ENCODE measurements at regions of chr15 and their contacts with region 1.

Region 1: DNA sequence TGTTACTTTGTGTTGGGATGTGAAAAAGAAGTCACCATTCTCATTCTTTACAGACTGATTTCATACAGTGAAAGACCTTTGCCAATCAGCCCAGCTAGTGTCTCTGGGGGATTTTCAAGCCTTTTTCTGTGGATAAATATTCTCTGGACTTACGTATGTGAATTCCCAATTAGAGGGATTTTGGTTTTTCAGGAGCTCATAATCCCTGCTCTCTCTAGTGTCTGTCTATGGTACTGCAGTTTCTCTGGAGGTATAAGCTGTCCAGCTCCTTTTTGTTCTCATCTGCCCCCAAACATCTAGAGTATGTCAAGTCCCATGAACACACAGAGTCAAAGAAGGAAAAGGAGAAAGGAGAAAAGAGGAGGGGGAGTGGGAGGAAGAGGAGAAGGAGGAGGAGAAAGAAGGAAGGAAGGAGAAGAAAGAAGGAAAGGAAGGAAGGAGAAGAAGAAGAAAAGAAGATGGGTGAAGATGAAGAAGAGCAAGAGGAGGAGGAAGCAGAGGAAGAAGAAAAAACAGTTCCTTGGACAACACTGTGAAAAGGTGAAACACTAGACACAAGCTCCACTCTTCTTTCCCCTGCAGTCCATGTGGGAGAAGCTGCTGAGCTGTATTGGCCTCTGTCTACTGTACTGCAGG is 218.6 kb downstream of the GREM1 start:
- DNase-seq: no peak
- H3K4me3 Mint-ChIP-seq: no peak overlapping the region
- H3K27ac Mint-ChIP-seq: no peak overlapping the region
- H3K4me1 Mint-ChIP-seq: no peaks in the 10 kb centered on the region
- H3K27me3 Mint-ChIP-seq: no peaks in the 10 kb centered on the region
- CTCF ChIP-seq: no peak

Region 2: DNA sequence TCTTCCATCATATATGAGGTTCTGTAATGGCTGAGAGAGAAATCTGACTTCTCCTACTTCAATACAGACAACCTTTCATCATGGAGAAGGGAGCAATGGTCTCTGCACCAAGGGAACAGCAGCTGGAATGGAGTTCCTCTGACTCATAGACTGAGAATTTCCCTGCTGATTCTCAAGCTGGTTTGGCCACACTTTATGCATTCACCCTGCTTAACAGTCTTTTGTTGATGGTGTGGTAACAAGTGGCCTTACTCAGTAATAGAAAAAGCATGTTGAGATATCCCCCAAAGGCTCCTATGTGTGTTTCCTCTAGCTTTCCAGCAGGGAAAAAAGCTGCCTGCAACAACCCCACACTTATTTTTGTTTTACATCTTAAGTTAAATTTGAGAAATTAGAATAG is 80.5 kb before region 1 on chr15:
- CTCF ChIA-PET with region 1: no interaction called
- intact Hi-C with region 1: loop called (anchors 10 kb)
- DNase-seq: peak; percentile 24
- H3K4me3 Mint-ChIP-seq: no peak overlapping the region
- H3K27ac Mint-ChIP-seq: no peak overlapping the region
- H3K4me1 Mint-ChIP-seq: no peaks in the 10 kb centered on the region
- H3K27me3 Mint-ChIP-seq: no peaks in the 10 kb centered on the region
- CTCF ChIP-seq: no peak

Measured in Calu3 (cell line).